H1 (cell line): ENCODE measurements at regions of chr3 and their contacts with region 1.

Region 1: DNA sequence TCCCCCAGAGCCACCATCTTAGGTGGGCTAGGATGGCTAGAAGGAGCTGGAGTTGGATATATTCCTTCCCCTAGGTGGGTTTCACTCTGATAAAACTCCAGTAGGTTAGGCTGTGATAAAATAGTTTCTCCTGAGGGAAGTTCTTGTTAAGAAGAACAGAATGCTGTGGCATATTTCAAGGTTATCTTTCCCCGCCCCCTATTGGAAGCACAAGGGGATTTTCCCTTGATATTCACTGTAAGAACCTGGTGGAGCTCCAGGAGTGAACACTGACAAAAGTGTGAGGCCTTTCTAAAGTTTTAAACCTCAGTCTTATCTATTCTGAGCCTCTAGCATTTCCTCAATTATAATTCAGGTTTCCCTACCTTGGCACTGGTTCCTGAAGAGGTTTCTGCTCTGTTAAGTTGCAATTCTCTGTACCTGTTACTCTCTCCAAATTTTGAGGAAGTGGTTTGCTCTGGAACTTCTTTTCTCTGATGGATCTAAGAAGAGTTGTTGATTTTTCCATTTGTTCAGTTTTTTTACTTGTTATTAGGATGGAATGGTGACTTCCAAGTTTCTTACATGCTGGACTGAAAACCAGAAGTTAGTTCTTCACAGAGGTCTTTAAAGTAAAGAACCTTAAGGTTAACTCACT is 113.5 kb downstream of the GMPS start:
- DNase-seq: no peak
- H3K4me3 ChIP-seq: no peak overlapping the region
- H3K27ac ChIP-seq: no peak overlapping the region
- H3K4me1 ChIP-seq: peaks cover 0 to 4% (median 0%) of the 10 kb centered on the region in 4 experiments; a peak in 2 of 7 replicates
- H3K27me3 ChIP-seq: no peaks in the 10 kb centered on the region
- CTCF ChIP-seq: peak in 2 of 3 experiments; percentile 20 to 22; a peak in 2 of 4 replicates
- EP300 ChIP-seq: no peak
- POLR2A ChIP-seq: no peak
- RAD21 ChIP-seq: peak; percentile 29 to 53; a peak in 3 of 4 replicates

Region 2: DNA sequence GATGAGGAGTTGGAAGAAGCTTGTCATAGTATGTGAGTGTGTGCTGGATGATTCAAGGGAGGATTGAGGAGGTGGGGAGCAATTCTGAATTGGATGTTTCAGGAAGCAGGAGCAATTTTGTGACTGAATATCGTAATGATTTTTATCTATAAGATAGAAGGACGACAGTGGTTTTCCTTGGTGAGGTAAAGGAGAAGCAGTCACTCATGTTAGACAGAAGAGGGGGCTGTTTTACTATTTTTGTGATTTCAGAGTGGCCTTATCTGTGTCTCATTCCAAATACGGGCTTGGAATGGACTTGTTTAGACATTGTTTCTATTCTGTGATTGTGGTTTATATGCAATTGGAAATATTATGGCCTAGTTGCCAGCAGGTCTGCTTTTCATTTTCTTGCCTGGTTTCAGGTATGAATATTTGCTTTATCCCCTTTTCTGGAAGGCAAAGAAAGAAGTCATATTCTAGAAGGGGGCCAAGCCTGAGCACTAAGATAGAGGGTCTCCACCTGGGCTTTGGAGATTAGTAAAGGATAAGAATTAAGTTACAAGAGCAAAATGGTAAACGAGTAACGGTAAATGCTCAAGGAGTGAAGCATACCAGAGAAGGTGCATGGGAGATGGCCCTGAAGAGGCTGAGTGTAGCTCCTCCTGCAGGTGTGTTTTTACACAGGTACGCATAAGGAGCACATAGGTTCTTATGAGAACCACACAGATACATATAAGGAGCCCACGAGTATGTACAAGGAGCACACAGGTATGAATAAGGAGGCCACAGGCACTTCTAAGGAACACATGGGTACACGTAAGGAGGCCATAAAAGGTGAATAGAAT is 11.8 kb after region 1 on chr3:
- CTCF ChIA-PET with region 1: interaction called, 23 read pairs
- POLR2A ChIA-PET with region 1: no interaction called
- DNase-seq: no peak
- H3K4me3 ChIP-seq: no peak overlapping the region
- H3K27ac ChIP-seq: no peak overlapping the region
- H3K4me1 ChIP-seq: no peaks in the 10 kb centered on the region
- H3K27me3 ChIP-seq: no peaks in the 10 kb centered on the region
- CTCF ChIP-seq: peak; percentile 25 to 65 (median 59)
- EP300 ChIP-seq: no peak
- POLR2A ChIP-seq: no peak
- RAD21 ChIP-seq: peak; percentile 80 to 81